ENCODE measurements at regions of chr4 and their contacts with region 1.

Region 1: DNA sequence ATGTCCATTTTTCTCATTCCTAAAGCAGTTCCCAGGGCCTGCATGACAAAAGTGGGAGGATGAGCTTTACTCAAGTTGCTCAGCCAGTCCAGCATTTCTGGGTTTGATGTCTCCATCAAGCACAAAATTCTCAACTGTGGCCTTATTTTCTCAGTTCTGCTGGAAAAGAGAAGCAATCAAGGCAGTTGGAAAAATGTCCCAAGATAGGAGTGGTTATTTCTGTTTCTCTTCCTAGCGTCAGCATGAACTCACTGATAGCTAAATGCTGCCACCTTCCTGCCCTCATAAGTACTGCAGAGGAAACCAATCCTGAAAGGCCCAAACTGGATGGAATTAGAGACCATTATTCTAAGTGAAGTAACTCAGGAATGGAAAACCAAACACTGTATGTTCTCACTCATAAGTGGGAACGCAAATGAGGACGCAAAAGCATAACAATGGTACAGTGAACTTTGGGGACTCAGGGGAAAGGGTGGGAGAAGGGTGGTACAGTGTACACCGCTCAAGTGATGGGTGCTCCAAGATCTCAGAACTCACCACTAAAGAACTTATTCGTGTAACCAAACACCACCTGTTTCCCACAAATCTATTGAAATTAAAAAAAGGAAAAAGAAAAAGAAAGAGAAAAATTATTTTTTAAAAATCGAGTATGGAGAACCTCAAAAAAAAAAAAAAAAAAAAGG is 29.6 kb downstream of the ADH7 start:
- DNase-seq: peak; percentile 70
- H3K4me3 ChIP-seq: no peak overlapping the region
- H3K27ac ChIP-seq: no peak overlapping the region
- H3K4me1 ChIP-seq: peaks cover 5% of the 10 kb centered on the region
- H3K27me3 ChIP-seq: peaks cover 4 to 15% of the 10 kb centered on the region in 2 experiments
- CTCF ChIP-seq: peak; percentile 75 to 78
- POLR2A ChIP-seq: no peak

Region 2: GRCh38 chr4:97987019-97987648 is 1418.4 kb before region 1 on chr4:
- CTCF ChIA-PET with region 1: interaction called, 11 read pairs
- POLR2A ChIA-PET with region 1: no interaction called
- dilution Hi-C with region 1: no loop called
- intact Hi-C with region 1: no loop called
- DNase-seq: peak; percentile 71
- H3K4me3 ChIP-seq: no peak overlapping the region
- H3K27ac ChIP-seq: no peak overlapping the region
- H3K4me1 ChIP-seq: no peaks in the 10 kb centered on the region
- H3K27me3 ChIP-seq: no peaks in the 10 kb centered on the region
- CTCF ChIP-seq: peak; percentile 33 to 48
- POLR2A ChIP-seq: no peak

Region 3: DNA sequence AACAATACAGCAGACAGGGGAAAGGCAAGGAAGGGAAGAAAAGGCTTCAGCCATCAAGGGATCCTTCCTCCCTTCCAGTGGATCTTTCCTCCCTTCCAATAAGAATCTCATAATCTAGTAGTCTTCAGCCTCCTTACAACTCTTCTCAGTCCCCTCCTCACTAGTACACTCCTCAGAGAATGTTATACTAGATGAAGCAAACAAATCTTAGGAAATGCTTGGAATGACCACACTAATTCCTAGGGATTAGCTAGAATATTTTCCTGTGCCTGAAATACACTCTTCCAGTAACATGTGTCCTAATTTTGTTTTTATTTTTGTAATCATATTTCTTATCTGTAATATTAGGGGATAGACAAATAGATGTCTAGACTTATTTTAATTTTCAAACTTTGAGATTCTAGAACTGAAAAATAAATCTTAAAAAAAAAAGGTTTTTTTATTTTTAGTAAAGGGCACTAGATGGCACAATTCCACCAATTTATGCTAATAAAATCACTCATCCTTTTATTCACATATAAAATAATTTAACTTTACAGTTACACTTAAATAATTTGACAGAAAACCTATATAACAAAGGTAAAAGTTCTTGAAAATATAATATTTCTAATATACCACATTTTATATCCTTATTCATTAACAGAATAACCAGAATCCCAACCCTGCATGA is 1255.3 kb before region 1 on chr4:
- CTCF ChIA-PET with region 1: interaction called, 7 read pairs
- POLR2A ChIA-PET with region 1: no interaction called
- dilution Hi-C with region 1: no loop called
- intact Hi-C with region 1: loop called (anchors 1 kb)
- DNase-seq: no peak
- H3K4me3 ChIP-seq: no peak overlapping the region
- H3K27ac ChIP-seq: no peak overlapping the region
- H3K4me1 ChIP-seq: peaks cover 6% of the 10 kb centered on the region
- H3K27me3 ChIP-seq: peaks cover 0 to 3% of the 10 kb centered on the region in 2 experiments
- CTCF ChIP-seq: no peak
- POLR2A ChIP-seq: no peak

Region 4: DNA sequence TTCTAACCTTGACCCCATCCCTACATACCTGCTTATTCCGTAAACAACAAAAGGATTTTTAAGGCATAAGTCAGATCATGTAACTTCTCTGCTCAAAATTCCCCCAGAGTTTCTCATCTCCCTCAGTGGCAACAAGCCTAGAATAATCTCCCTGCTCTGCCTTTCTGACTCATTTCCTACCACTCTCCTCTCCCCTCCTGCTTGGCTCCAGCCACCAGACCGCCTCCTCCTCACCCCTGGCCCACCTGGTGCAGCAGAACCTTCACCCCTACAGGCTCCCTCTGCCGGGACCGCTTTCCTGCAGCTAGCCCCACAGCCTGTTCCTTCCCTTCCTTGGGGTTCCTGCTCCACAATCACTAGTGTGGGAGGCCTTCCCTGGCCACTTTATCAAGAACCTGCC is 779.2 kb before region 1 on chr4:
- CTCF ChIA-PET with region 1: no interaction called
- POLR2A ChIA-PET with region 1: no interaction called
- dilution Hi-C with region 1: no loop called
- intact Hi-C with region 1: loop called (anchors 10 kb)
- DNase-seq: peak; percentile 91
- H3K4me3 ChIP-seq: peak overlapping the region in 1 of 3 experiments; percentile 0
- H3K27ac ChIP-seq: peak overlapping the region; percentile 74
- H3K4me1 ChIP-seq: peaks cover 45% of the 10 kb centered on the region
- H3K27me3 ChIP-seq: no peaks in the 10 kb centered on the region
- CTCF ChIP-seq: peak in 1 of 2 donors; percentile 4
- POLR2A ChIP-seq: peak; percentile 25

Region 5: DNA sequence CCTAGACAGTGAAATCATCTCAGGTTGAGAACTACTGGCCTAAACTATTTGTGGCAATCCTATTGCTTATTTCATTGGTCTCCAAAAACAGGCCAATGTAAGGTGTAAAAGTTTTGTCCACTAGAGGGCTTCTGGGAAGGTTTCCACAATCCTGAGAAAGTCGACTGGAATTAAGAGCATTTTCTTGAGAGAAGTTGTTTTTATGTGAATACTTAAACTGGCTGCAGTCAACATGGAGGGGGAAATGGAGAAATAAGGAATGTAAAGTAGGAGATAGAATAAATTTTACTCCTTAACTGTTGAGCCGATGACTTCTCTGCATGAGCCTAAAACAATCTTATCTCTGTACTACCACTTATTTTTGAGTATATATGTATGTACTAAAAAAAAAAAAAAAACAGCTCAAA is 465.7 kb before region 1 on chr4:
- CTCF ChIA-PET with region 1: interaction called, 3 read pairs
- POLR2A ChIA-PET with region 1: no interaction called
- dilution Hi-C with region 1: no loop called
- intact Hi-C with region 1: loop called (anchors 1 kb)
- DNase-seq: peak; percentile 81
- H3K4me3 ChIP-seq: no peak overlapping the region
- H3K27ac ChIP-seq: no peak overlapping the region
- H3K4me1 ChIP-seq: peaks cover 3% of the 10 kb centered on the region
- H3K27me3 ChIP-seq: no peaks in the 10 kb centered on the region
- CTCF ChIP-seq: peak; percentile 58 to 64
- POLR2A ChIP-seq: no peak

Region 6: DNA sequence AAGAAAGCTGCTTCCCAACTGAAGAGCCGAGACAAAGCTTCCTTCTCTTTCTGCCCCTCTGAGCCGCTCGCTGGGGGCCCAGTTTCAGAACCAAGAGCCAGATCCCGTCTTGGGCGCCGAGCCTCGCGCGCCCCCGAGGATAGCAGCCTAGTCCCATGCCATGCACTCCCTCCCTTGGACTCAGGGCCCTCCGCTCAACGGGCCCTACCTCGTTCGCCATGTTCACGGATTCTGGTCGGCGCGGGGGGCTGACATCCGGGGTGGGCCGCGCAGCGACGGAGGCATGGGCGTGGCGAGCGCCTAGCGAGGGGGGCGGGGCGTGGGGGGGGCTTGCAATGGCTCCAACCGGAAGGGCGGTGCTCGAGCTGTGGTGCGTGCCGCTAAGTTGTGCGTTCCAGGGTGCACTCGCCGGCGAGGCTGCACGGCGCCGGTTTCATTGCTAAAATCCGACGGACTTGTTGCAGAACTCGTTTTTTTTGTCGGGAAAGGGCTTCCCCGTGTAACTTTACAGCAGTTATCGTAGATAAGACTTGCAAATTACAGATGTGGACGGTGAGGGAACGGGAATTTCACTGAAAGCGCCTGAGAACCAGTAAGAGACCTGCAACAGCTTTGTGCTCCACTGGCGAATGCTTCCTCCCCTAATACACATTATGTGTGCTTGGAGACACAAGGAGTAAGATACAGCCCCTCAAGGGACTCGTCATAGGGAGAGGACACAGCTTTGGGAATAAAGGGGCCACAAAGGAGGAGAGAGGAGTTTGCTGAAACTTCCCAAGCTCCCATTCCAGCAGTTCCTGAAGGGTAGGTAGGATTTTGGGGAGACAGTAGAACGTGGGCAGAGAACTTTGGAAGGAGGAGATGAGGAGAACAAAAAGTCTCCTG is 316.9 kb before region 1 on chr4 and contains the start of gene ADH5:
- CTCF ChIA-PET with region 1: interaction called, 3 read pairs
- POLR2A ChIA-PET with region 1: no interaction called
- dilution Hi-C with region 1: no loop called
- intact Hi-C with region 1: loop called (anchors 1 kb)
- DNase-seq: peak; percentile 72
- H3K4me3 ChIP-seq: peak within 1 kb of the TSS; percentile 80 to 98 (median 82)
- H3K27ac ChIP-seq: peak within 1 kb of the TSS; percentile 66
- H3K4me1 ChIP-seq: peaks cover 8% of the 10 kb centered on the region
- H3K27me3 ChIP-seq: no peaks in the 10 kb centered on the region
- CTCF ChIP-seq: no peak
- POLR2A ChIP-seq: peak; percentile 91
- total RNA-seq, gene ADH5: 101 and 103 TPM in 2 replicates

Region 7: DNA sequence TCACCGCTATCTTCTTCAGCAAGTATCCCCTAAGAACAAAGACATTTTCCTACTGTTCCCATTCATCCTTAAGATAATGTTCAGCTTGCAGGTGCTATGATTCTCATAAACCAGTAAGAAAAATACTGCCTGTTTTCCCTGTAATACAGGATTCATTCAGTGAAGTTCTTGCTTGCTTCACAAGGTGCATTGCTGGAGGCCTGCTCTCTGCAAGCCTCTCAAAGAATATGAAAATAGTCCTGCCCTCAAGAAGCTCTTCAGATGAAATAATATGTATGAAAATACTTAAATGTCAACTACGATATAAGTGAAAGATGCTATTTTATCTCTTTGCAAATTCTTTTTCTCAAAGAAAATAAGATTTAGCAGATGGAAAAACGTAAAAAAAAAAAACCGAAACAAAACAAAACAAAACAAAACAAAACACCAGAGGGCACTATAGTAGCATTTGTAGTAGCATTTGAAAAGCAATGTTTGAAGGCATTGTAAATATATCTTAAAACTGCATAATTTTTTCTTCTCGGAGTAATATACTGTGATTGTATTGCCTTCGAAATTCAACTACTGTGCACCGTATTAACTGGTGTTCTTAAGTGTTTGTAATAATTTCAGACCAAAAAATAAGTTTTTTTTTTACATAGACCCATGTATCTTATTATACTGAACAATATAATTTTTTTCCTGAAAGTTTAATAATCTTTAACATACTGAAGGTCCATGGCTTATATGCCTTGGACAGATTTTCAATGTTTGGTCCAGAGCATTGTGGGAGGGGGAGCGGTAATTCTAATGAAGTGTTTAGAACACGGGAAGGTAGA is 287.5 kb before region 1 on chr4:
- CTCF ChIA-PET with region 1: interaction called, 6 read pairs
- POLR2A ChIA-PET with region 1: no interaction called
- dilution Hi-C with region 1: no loop called
- intact Hi-C with region 1: loop called (anchors 1 kb)
- DNase-seq: peak; percentile 18
- H3K4me3 ChIP-seq: no peak overlapping the region
- H3K27ac ChIP-seq: no peak overlapping the region
- H3K4me1 ChIP-seq: no peaks in the 10 kb centered on the region
- H3K27me3 ChIP-seq: peaks cover 0 to 2% of the 10 kb centered on the region in 2 experiments
- CTCF ChIP-seq: no peak
- POLR2A ChIP-seq: no peak

Region 8: GRCh38 chr4:99282731-99283130 is 122.8 kb before region 1 on chr4:
- CTCF ChIA-PET with region 1: no interaction called
- POLR2A ChIA-PET with region 1: no interaction called
- dilution Hi-C with region 1: no loop called
- intact Hi-C with region 1: no loop called
- DNase-seq: no peak
- H3K4me3 ChIP-seq: no peak overlapping the region
- H3K27ac ChIP-seq: no peak overlapping the region
- H3K4me1 ChIP-seq: no peaks in the 10 kb centered on the region
- H3K27me3 ChIP-seq: no peaks in the 10 kb centered on the region
- CTCF ChIP-seq: no peak
- POLR2A ChIP-seq: no peak

Region 9: GRCh38 chr4:99362768-99363167 is 42.8 kb before region 1 on chr4:
- CTCF ChIA-PET with region 1: no interaction called
- POLR2A ChIA-PET with region 1: no interaction called
- dilution Hi-C with region 1: no loop called
- intact Hi-C with region 1: no loop called
- DNase-seq: no peak
- H3K4me3 ChIP-seq: no peak overlapping the region
- H3K27ac ChIP-seq: no peak overlapping the region
- H3K4me1 ChIP-seq: no peaks in the 10 kb centered on the region
- H3K27me3 ChIP-seq: no peaks in the 10 kb centered on the region
- CTCF ChIP-seq: no peak
- POLR2A ChIP-seq: no peak